SK-N-SH (cell line): ENCODE measurements at regions of chr19 and their contacts with region 1.

Region 1: GRCh38 chr19:12847159-12848139 is 9.1 kb downstream of the MAST1 start:
- DNase-seq: peak; percentile 95
- H3K4me3 ChIP-seq: peak overlapping the region in 1 of 2 experiments; percentile 31; a peak in 1 of 4 replicates
- H3K27ac ChIP-seq: no peak overlapping the region; a peak in 1 of 4 replicates
- H3K4me1 ChIP-seq: peaks cover 0 to 2% of the 10 kb centered on the region in 2 experiments; a peak in 1 of 4 replicates
- H3K27me3 ChIP-seq: no peaks in the 10 kb centered on the region
- CTCF ChIP-seq: peak; percentile 93
- EP300 ChIP-seq: no peak
- RAD21 ChIP-seq: peak; percentile 89

Region 2: DNA sequence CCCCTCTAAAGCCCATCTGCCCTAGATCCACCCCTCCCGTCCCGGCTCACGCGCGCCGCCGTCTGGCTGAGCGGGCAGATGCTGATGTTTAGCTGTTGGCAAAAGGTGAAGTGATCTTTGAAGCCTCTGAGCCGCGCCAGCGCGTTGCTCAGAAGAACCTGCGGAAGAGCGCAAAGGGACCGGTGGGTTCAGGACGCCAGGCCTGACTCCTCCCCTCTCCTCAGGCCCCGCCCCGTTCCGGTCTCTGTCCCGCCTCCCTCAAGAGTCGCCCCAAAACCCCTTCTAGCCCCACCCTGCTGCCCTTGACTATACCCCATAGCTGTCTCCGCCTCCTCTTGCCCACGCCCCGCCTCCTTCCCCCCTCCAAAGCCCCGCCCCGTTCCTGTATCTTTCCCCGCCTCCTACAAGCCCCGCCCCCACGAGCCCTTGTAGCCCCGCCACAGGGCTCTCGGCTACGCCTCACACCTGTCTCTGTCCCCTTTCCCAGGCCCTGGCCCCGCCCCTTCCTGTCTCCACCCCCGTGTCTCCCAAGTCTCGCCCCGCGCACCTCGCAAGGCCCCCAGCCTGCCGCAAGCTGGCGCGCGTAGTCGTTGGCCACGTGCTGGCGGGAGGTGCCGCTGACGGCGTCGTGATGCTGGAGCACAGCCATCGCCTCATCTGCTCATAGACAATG is 190.4 kb before region 1 on chr19:
- CTCF ChIA-PET with region 1: no interaction called
- POLR2A ChIA-PET with region 1: no interaction called
- DNase-seq: peak; percentile 86
- H3K4me3 ChIP-seq: no peak overlapping the region
- H3K27ac ChIP-seq: no peak overlapping the region
- H3K4me1 ChIP-seq: no peaks in the 10 kb centered on the region
- H3K27me3 ChIP-seq: no peaks in the 10 kb centered on the region
- CTCF ChIP-seq: no peak
- EP300 ChIP-seq: no peak
- RAD21 ChIP-seq: no peak

Region 3: DNA sequence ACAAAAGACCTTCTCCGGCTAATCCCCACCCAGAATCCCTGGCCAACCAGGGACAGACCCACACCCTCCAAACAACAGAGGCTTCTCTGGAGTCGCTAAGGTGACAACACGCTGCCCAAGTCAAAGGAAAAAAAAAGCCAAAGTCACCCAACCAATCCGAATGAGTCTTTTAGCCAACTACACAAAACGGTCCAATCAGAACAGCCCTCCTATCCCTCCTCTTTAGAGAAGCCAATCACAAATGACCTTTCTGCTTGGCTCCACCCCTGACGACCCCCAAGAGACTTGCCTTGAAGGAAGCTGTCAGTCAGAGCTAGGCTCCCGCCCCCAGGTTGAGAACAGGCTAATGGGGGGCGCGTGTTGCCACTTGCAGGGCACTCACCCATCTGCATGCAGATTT is 144.4 kb before region 1 on chr19:
- CTCF ChIA-PET with region 1: no interaction called
- POLR2A ChIA-PET with region 1: no interaction called
- DNase-seq: peak; percentile 90
- H3K4me3 ChIP-seq: no peak overlapping the region
- H3K27ac ChIP-seq: no peak overlapping the region
- H3K4me1 ChIP-seq: no peaks in the 10 kb centered on the region
- H3K27me3 ChIP-seq: no peaks in the 10 kb centered on the region
- CTCF ChIP-seq: no peak
- EP300 ChIP-seq: no peak
- RAD21 ChIP-seq: no peak

Region 4: GRCh38 chr19:12766051-12766521 is 81.4 kb before region 1 on chr19:
- CTCF ChIA-PET with region 1: interaction called, 55 read pairs
- POLR2A ChIA-PET with region 1: no interaction called
- DNase-seq: no peak
- H3K4me3 ChIP-seq: no peak overlapping the region
- H3K27ac ChIP-seq: no peak overlapping the region
- H3K4me1 ChIP-seq: peaks cover 0 to 3% of the 10 kb centered on the region in 2 experiments; a peak in 1 of 4 replicates
- H3K27me3 ChIP-seq: no peaks in the 10 kb centered on the region
- CTCF ChIP-seq: no peak
- EP300 ChIP-seq: no peak
- RAD21 ChIP-seq: no peak

Region 5: GRCh38 chr19:12789904-12790619 is 57.4 kb before region 1 on chr19:
- CTCF ChIA-PET with region 1: interaction called, 41 read pairs
- POLR2A ChIA-PET with region 1: interaction called, 3 read pairs
- DNase-seq: peak; percentile 92
- H3K4me3 ChIP-seq: peak overlapping the region; percentile 55 to 80
- H3K27ac ChIP-seq: peak overlapping the region; percentile 96 to 97
- H3K4me1 ChIP-seq: peaks cover 38 to 53% of the 10 kb centered on the region in 2 experiments
- H3K27me3 ChIP-seq: no peaks in the 10 kb centered on the region
- CTCF ChIP-seq: no peak
- EP300 ChIP-seq: no peak
- RAD21 ChIP-seq: no peak

Region 6: GRCh38 chr19:12806239-12807081 is 41.0 kb before region 1 on chr19 and contains the start of gene RNASEH2A:
- CTCF ChIA-PET with region 1: interaction called, 10 read pairs
- POLR2A ChIA-PET with region 1: interaction called, 3 read pairs
- DNase-seq: peak; percentile 95
- H3K4me3 ChIP-seq: peak within 1 kb of the TSS; percentile 68 to 75
- H3K27ac ChIP-seq: peak within 1 kb of the TSS in 1 of 2 experiments; percentile 64; a peak in 2 of 4 replicates
- H3K4me1 ChIP-seq: peaks cover 4 to 18% of the 10 kb centered on the region in 2 experiments; a peak in 1 of 4 replicates
- H3K27me3 ChIP-seq: no peaks in the 10 kb centered on the region
- CTCF ChIP-seq: no peak; the same call in 1 of the 2 replicates
- EP300 ChIP-seq: no peak; a peak in 1 of 4 replicates
- RAD21 ChIP-seq: no peak
- polyA plus RNA-seq, gene RNASEH2A: 35.2 and 48.1 TPM in 2 replicates

Region 7: GRCh38 chr19:12825254-12826131 is 22.0 kb before region 1 on chr19:
- CTCF ChIA-PET with region 1: interaction called, 16 read pairs
- POLR2A ChIA-PET with region 1: interaction called, 4 read pairs
- DNase-seq: peak; percentile 88
- H3K4me3 ChIP-seq: peak overlapping the region in 1 of 2 experiments; percentile 15; a peak in 1 of 4 replicates
- H3K27ac ChIP-seq: no peak overlapping the region
- H3K4me1 ChIP-seq: peaks cover 0 to 8% of the 10 kb centered on the region in 2 experiments; a peak in 1 of 4 replicates
- H3K27me3 ChIP-seq: no peaks in the 10 kb centered on the region
- CTCF ChIP-seq: peak; percentile 48
- EP300 ChIP-seq: no peak
- RAD21 ChIP-seq: peak; percentile 36

Region 8: DNA sequence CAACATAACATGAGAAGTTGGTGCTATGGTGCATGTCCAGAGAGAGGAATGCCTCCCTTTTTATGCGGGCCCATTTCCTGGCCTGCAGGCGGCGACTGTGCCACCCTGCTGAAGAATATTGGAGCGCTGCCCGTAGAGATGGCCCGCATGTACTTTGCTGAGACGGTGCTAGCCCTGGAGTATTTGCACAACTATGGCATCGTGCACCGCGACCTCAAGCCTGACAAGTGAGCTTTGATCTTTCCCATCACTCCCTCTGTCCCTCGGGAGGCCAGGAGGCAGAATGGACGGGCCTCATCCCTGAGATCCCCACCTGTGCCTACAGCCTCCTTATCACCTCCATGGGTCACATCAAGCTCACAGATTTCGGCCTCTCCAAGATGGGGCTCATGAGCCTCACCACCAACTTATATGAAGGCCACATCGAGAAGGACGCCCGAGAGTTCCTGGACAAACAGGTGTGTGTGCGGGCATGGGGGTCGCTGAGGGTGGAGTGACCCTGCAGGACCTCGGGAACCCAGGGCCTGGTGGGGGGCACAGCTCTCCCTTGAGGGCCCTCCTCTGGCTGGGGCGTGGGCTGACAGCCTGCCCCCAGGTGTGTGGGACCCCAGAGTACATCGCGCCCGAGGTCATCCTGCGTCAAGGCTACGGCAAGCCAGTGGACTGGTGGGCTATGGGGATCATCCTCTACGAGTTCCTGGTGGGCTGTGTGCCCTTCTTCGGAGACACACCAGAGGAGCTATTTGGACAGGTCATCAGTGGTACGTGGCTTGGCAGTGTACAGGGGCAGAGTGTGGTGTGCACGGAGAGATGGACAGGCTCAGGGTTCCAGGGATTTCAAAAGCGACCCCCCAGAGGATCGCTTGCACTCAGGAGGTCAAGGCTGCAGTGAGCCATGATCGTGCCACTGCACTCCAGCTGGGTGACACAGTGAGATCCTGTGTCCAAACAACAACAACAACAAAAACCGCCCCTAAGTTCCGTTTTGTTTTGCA is 17.6 kb after region 1 on chr19:
- CTCF ChIA-PET with region 1: interaction called, 69 read pairs
- POLR2A ChIA-PET with region 1: no interaction called
- DNase-seq: no peak
- H3K4me3 ChIP-seq: no peak overlapping the region
- H3K27ac ChIP-seq: no peak overlapping the region
- H3K4me1 ChIP-seq: no peaks in the 10 kb centered on the region
- H3K27me3 ChIP-seq: no peaks in the 10 kb centered on the region
- CTCF ChIP-seq: no peak
- EP300 ChIP-seq: no peak
- RAD21 ChIP-seq: no peak

Region 9: DNA sequence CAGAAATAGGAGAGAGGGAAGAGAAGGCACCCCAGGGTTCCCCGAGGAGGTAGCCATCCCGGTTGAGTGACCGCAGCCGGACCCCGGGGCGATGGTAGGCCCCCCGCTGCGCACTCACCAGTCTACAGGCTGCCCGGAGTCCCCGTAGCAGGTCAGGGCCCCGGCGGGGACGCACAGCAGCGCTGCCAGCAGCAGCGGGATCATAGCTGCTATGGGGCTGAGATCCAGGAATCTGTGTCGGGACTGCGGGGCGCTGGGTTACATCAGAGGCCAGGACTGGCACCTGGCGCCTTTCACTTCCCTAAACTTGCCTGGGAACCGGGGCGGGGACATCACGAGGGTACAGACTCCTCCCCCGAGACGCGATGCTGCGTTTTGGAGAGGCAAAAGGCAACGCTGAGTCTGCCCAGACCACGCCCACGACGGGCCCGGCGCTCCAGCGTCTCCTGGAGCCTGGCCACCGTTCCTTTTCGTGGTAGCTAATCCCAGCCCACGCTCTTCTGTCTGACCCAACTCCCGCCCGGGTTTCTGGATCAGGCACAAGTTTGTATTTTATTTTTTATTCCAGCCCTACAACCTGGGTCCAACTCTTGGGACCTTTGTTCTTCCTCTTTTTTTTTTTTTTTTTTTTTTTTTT is 33.8 kb after region 1 on chr19 and contains the start of gene DNASE2:
- CTCF ChIA-PET with region 1: interaction called, 62 read pairs
- POLR2A ChIA-PET with region 1: no interaction called
- DNase-seq: peak; percentile 95
- H3K4me3 ChIP-seq: peak within 1 kb of the TSS; percentile 68 to 86
- H3K27ac ChIP-seq: peak within 1 kb of the TSS; percentile 71 to 76
- H3K4me1 ChIP-seq: peaks cover 0 to 9% of the 10 kb centered on the region in 2 experiments; a peak in 1 of 4 replicates
- H3K27me3 ChIP-seq: peaks cover 11% of the 10 kb centered on the region; the same call in 1 of the 2 replicates
- CTCF ChIP-seq: no peak
- EP300 ChIP-seq: no peak
- RAD21 ChIP-seq: no peak
- polyA plus RNA-seq, gene DNASE2: 29.8 and 40.7 TPM in 2 replicates

Region 10: GRCh38 chr19:13012690-13013608 is 165.5 kb after region 1 on chr19:
- CTCF ChIA-PET with region 1: no interaction called
- POLR2A ChIA-PET with region 1: no interaction called
- DNase-seq: no peak
- H3K4me3 ChIP-seq: no peak overlapping the region
- H3K27ac ChIP-seq: no peak overlapping the region
- H3K4me1 ChIP-seq: peaks cover 4 to 28% of the 10 kb centered on the region in 2 experiments; a peak in 3 of 4 replicates
- H3K27me3 ChIP-seq: no peaks in the 10 kb centered on the region
- CTCF ChIP-seq: no peak
- EP300 ChIP-seq: no peak
- RAD21 ChIP-seq: no peak